ENCODE measurements at regions of chr4 and their contacts with region 1.

Region 1: DNA sequence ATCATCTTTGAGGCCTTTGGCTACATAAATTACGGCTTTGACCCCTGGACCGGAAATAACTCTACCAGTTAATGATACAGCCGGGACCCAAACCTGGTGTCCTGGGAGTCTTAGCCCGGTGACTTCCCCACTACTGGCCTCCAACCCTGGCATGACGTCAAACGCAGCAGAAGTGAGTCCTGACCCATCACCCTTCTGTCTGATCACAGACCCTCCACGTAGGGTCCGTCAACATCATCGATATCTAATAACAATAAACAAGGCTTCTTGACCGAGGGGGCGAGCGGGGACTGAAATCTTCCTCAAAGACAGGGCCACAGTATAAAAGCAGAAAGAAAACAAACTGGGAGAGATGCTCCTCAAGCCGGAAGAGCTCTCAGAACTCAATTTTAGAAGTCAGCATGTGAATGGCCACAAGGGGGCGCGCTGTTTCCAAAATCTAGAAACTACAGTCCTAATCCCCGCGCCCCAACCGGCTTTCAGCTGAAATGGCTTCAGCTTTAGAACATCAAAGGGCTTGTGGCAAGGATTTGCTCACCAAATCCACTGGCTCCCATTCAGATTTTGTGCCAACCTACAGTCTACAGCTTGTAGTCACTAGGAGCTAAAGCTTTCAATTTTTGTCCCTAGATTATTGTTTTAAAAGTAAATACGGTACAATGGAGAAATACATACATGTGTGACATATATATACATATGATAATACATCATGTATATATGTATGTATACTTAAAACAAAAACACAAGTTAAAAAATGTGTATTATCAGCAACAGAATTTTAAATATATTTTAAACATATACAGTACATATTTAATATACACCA is 46.4 kb upstream of the ENPP6 start:
- DNase-seq: peak; percentile 91
- ATAC-seq: peak; percentile 63
- H3K4me3 ChIP-seq: no peak overlapping the region
- H3K27ac ChIP-seq: no peak overlapping the region
- H3K4me1 ChIP-seq: peaks cover 25% of the 10 kb centered on the region
- H3K27me3 ChIP-seq: no peaks in the 10 kb centered on the region
- CTCF ChIP-seq: peak; percentile 81

Region 2: DNA sequence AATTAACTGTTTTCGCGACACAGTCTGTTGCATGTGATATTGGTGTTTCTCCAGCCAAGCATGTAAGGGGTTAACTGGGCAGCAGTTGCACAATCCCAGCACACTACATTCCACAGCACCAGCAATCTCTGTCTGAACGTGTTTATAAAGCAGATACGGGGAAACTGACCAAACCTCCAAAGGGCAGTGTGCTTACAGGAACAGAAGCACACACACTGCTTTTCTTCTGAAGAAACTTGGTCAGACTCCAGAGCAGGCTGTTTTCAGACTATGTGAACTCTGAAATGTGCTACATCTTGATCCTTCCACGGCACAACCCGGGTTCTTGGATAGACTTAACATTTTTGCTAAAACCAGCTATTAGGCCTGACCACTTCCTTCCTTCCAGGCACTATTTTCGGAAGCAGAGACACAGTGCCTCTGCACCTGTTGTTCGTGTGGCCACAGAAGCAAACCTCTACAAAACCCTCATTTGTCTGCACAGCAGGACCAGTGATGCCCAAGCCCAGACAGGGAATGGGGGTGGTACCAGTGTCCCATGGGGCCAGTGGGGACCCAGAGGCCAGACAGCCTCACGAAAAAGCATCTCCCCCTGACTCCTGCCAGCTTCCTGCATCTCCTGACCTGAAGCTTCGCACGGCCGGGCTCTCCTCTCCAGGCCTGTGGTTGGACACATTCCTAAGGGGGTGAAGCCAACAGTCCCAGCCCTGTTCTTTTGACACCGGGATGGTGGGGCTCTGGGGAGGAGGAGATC is 120.1 kb after region 1 on chr4:
- CTCF ChIA-PET with region 1: interaction called, 6 read pairs
- POLR2A ChIA-PET with region 1: no interaction called
- intact Hi-C with region 1: loop called (anchors 1 kb)
- DNase-seq: peak; percentile 43
- ATAC-seq: peak; percentile 52
- H3K4me3 ChIP-seq: peak overlapping the region; percentile 64
- H3K27ac ChIP-seq: peak overlapping the region; percentile 94
- H3K4me1 ChIP-seq: peaks cover 26% of the 10 kb centered on the region
- H3K27me3 ChIP-seq: no peaks in the 10 kb centered on the region
- CTCF ChIP-seq: no peak

Region 3: GRCh38 chr4:184417802-184418511 is 153.8 kb after region 1 on chr4:
- CTCF ChIA-PET with region 1: no interaction called
- POLR2A ChIA-PET with region 1: no interaction called
- intact Hi-C with region 1: loop called (anchors 5 kb)
- DNase-seq: peak; percentile 89
- ATAC-seq: peak; percentile 99
- H3K4me3 ChIP-seq: no peak overlapping the region
- H3K27ac ChIP-seq: peak overlapping the region; percentile 87
- H3K4me1 ChIP-seq: peaks cover 24% of the 10 kb centered on the region
- H3K27me3 ChIP-seq: no peaks in the 10 kb centered on the region
- CTCF ChIP-seq: peak; percentile 27; the same call in 1 of the 2 replicates

Region 4: GRCh38 chr4:184538023-184538599 is 274.0 kb after region 1 on chr4:
- CTCF ChIA-PET with region 1: interaction called, 10 read pairs
- POLR2A ChIA-PET with region 1: interaction called, 4 read pairs
- intact Hi-C with region 1: loop called (anchors 1 kb)
- DNase-seq: peak; percentile 80
- ATAC-seq: peak; percentile 79
- H3K4me3 ChIP-seq: peak overlapping the region; percentile 85
- H3K27ac ChIP-seq: peak overlapping the region; percentile 84
- H3K4me1 ChIP-seq: peaks cover 4% of the 10 kb centered on the region; the same call in 1 of the 2 replicates
- H3K27me3 ChIP-seq: no peaks in the 10 kb centered on the region
- CTCF ChIP-seq: peak; percentile 68

Region 5: DNA sequence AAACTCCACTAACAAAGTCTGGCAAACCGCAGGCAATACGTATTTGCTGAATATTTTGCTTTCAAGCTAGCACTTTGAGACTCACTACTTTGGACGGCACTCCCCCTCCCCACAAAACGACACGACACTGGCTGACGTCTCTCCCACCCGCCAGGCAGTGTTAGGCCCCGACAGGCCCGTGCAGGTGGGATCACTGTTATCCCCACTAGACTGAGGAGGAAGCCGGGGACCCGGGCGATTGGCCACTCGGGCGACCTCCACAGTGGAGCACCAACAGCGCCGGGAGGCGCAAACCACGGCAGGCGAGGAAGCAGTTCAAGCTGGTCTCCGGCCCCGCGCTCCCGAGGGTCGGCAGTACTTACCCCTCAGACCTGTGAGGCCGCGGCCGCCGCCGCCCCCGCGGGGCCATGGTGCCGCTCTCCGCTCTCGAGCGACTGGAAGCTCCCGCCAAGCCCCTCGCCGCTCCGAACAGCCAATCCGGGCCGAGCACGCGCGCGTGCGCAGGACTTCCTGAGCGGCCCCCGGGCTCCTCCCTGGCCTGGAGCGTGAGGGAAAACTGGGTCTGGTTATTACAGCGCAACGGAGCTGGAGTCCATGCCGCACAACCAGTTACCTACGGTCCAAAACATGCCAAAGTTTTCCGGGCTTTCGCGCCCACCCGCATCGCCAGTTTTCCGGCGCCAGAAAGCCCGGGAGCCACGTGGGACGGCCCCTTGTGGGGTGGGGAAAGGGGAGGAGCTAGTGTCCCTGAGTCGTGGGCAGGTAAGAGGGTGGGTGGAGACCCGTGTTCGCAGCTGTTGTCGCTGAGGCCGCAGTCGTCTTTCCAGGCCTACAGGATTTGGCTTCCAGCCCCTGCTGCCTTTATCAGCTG is 469.8 kb after region 1 on chr4 and contains the start of gene CENPU:
- CTCF ChIA-PET with region 1: no interaction called
- POLR2A ChIA-PET with region 1: no interaction called
- intact Hi-C with region 1: loop called (anchors 10 kb)
- DNase-seq: peak; percentile 96
- ATAC-seq: peak; percentile 82
- H3K4me3 ChIP-seq: peak within 1 kb of the TSS; percentile 95
- H3K27ac ChIP-seq: peak within 1 kb of the TSS; percentile 71
- H3K4me1 ChIP-seq: peaks cover 16% of the 10 kb centered on the region
- H3K27me3 ChIP-seq: no peaks in the 10 kb centered on the region
- CTCF ChIP-seq: no peak
- total RNA-seq, gene CENPU: 27.6 and 38.2 TPM in 2 replicates